H1 (cell line): ENCODE measurements at regions of chr13 and their contacts with region 1.

Region 1: GRCh38 chr13:91318886-91319285 is 28.6 kb upstream of the MIR17HG start:
- DNase-seq: no peak
- H3K4me3 ChIP-seq: no peak overlapping the region
- H3K27ac ChIP-seq: no peak overlapping the region
- H3K4me1 ChIP-seq: peaks cover 0 to 2% (median 0%) of the 10 kb centered on the region in 4 experiments; a peak in 1 of 7 replicates
- H3K27me3 ChIP-seq: no peaks in the 10 kb centered on the region
- CTCF ChIP-seq: no peak
- EP300 ChIP-seq: no peak
- POLR2A ChIP-seq: no peak
- RAD21 ChIP-seq: no peak

Region 2: DNA sequence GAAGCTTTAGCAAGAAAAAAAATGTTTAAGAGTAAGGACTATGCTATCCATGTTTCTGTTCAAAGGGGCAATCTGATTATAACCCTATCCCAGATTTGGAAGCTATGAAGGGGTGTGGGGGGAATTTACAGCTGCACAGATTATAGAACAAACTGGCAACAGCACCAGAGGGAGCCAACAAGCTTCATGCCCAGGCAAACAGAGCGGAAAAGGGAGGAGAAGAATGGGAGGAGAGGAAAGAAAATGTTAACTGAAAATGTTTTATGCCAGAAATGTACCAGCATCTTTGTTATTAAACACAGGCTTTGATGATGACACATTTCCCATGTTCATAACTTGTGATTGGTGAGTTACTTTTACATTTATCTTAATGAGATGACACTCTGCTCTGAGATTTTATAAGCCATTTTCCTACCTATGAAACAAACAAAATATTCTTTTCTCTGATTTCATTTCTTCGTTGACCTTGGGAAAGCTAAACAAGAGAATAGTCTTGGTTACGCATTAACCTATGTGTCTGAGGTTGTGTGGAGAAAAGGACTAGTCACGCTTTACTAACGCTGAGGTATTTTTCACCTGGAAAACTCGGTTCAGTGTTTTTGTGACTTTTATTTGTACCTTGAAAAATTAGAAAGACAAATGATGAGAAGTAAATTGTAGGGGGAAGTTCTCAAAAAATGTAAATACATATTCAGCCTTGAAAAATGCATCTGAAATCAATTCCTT is 207.2 kb before region 1 on chr13:
- CTCF ChIA-PET with region 1: no interaction called
- POLR2A ChIA-PET with region 1: no interaction called
- DNase-seq: no peak
- H3K4me3 ChIP-seq: no peak overlapping the region
- H3K27ac ChIP-seq: no peak overlapping the region
- H3K4me1 ChIP-seq: no peaks in the 10 kb centered on the region
- H3K27me3 ChIP-seq: no peaks in the 10 kb centered on the region
- CTCF ChIP-seq: no peak
- EP300 ChIP-seq: no peak
- POLR2A ChIP-seq: no peak
- RAD21 ChIP-seq: peak; percentile 14 to 26; a peak in 1 of 4 replicates

Region 3: DNA sequence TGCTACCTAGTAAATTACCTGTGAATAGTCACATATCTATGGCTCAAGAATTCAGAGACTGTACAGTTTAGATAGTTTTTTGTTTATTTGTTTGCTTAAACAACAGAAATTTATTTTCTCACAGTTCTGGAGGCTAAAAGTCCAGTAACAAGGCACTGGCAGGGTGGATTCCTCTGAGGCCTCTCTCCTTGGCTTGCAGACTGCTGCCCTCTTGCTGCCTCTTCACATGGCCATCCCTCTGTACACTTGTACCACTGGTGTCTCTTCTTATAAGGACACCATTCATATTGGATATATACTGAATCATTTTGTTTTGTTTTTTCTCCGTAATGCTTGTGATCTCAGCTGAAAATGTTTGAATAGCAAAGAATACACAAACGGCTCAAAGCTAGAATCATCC is 27.8 kb before region 1 on chr13:
- CTCF ChIA-PET with region 1: no interaction called
- POLR2A ChIA-PET with region 1: no interaction called
- DNase-seq: no peak
- H3K4me3 ChIP-seq: no peak overlapping the region
- H3K27ac ChIP-seq: no peak overlapping the region
- H3K4me1 ChIP-seq: no peaks in the 10 kb centered on the region
- H3K27me3 ChIP-seq: no peaks in the 10 kb centered on the region
- CTCF ChIP-seq: no peak
- EP300 ChIP-seq: no peak
- POLR2A ChIP-seq: no peak
- RAD21 ChIP-seq: peak; percentile 12 to 24; a peak in 2 of 4 replicates

Region 4: GRCh38 chr13:91308299-91308698 is 10.6 kb before region 1 on chr13:
- CTCF ChIA-PET with region 1: interaction called, 10 read pairs
- POLR2A ChIA-PET with region 1: interaction called, 3 read pairs
- DNase-seq: no peak
- H3K4me3 ChIP-seq: no peak overlapping the region
- H3K27ac ChIP-seq: no peak overlapping the region
- H3K4me1 ChIP-seq: no peaks in the 10 kb centered on the region
- H3K27me3 ChIP-seq: no peaks in the 10 kb centered on the region
- CTCF ChIP-seq: peak in 2 of 3 experiments; percentile 7 to 35; a peak in 2 of 4 replicates
- EP300 ChIP-seq: no peak
- POLR2A ChIP-seq: no peak
- RAD21 ChIP-seq: 0 out of 4 replicates have a peak, but pooled peaks have one; percentile 8 to 10

Region 5: GRCh38 chr13:91348906-91349435 is 30.1 kb after region 1 on chr13:
- CTCF ChIA-PET with region 1: interaction called, 5 read pairs
- POLR2A ChIA-PET with region 1: interaction called, 10 read pairs
- DNase-seq: peak in 1 of 2 experiments; percentile 95
- H3K4me3 ChIP-seq: peak overlapping the region; percentile 68 to 97 (median 78)
- H3K27ac ChIP-seq: peak overlapping the region; percentile 96
- H3K4me1 ChIP-seq: peaks cover 0 to 9% (median 6%) of the 10 kb centered on the region in 4 experiments; a peak in 5 of 7 replicates
- H3K27me3 ChIP-seq: no peaks in the 10 kb centered on the region
- CTCF ChIP-seq: peak; percentile 81 to 89 (median 84)
- EP300 ChIP-seq: no peak; a peak in 1 of 3 replicates
- POLR2A ChIP-seq: peak; percentile 40 to 89
- RAD21 ChIP-seq: peak in 1 of 2 experiments; percentile 33; a peak in 1 of 4 replicates